ENCODE measurements at regions of chr12 and their contacts with region 1.

Region 1: GRCh38 chr12:67562513-67563287 is 85.8 kb upstream of the DYRK2 start:
- DNase-seq: no peak
- ATAC-seq: no peak
- H3K4me3 ChIP-seq: no peak overlapping the region
- H3K27ac ChIP-seq: no peak overlapping the region
- H3K4me1 ChIP-seq: no peaks in the 10 kb centered on the region
- H3K27me3 ChIP-seq: no peaks in the 10 kb centered on the region
- CTCF ChIP-seq: no peak
- POLR2A ChIP-seq: no peak

Region 2: GRCh38 chr12:67182551-67182950 is 380.1 kb before region 1 on chr12:
- intact Hi-C with region 1: no loop called
- DNase-seq: no peak
- ATAC-seq: no peak
- H3K4me3 ChIP-seq: no peak overlapping the region
- H3K27ac ChIP-seq: no peak overlapping the region
- H3K4me1 ChIP-seq: no peaks in the 10 kb centered on the region
- H3K27me3 ChIP-seq: peaks cover 0 to 3% (median 0%) of the 10 kb centered on the region in 9 donors
- CTCF ChIP-seq: no peak
- POLR2A ChIP-seq: no peak

Region 3: DNA sequence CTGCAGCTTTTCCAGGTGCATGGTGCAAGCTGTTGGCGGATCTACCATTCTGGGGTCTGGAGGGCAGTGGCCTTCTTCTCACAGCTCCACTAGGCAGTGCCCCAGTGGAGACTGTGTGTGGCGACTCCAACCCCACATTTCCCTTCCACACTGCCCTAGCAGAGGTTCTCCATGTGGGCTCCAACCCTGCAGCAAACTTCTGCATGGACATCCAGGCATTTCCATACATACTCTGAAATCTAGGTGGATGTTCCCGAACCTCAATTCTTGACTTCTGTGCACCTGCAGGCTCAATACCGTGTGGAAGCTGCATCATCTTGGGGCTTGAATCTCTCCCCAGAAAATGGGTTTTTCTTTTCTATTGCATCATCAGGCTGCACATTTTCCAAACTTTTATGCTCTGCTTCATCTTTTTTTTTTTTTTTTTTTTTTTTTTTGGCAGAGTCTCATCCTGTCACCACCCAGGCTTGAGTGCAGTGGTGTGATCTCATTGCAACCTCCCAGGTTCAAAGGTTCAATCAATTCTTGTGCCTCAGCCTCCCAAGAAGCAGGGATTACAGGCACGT is 74.3 kb before region 1 on chr12:
- intact Hi-C with region 1: no loop called
- DNase-seq: no peak
- ATAC-seq: no peak
- H3K4me3 ChIP-seq: no peak overlapping the region
- H3K27ac ChIP-seq: no peak overlapping the region
- H3K4me1 ChIP-seq: peaks cover 0 to 13% (median 3%) of the 10 kb centered on the region in 12 donors
- H3K27me3 ChIP-seq: no peaks in the 10 kb centered on the region
- CTCF ChIP-seq: no peak
- POLR2A ChIP-seq: no peak

Region 4: GRCh38 chr12:67592216-67593011 is 29.7 kb after region 1 on chr12:
- intact Hi-C with region 1: loop called in 1 of 10 experiments (anchors 2 kb)
- DNase-seq: peak in 1 of 5 donors; percentile 28
- ATAC-seq: peak in 3 of 4 donors; percentile 61 to 77 (median 76)
- H3K4me3 ChIP-seq: no peak overlapping the region
- H3K27ac ChIP-seq: peak overlapping the region in 4 of 12 donors; percentile 11 to 27 (median 24)
- H3K4me1 ChIP-seq: peaks cover 0 to 33% (median 8%) of the 10 kb centered on the region in 12 donors
- H3K27me3 ChIP-seq: no peaks in the 10 kb centered on the region
- CTCF ChIP-seq: no peak
- POLR2A ChIP-seq: no peak

Region 5: DNA sequence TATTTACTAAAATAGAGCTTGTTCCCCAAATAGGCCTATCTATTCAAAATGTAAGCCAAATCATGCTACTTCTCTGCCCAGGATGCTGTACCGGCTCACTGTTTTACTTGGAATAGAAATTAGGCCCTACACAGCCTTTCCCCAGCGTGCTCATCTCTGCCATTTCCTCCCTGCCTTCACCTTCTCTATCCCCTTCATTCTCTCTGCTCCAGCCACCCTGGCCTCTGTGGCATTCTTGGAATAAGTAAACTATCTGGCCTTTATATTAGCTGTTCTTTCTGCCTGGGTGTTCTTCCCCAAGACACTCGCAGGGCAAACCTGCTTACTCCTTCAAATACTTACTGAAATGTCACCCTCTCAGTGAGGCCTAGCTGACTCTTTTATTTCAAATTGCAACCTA is 54.9 kb after region 1 on chr12:
- intact Hi-C with region 1: no loop called
- DNase-seq: no peak
- ATAC-seq: no peak
- H3K4me3 ChIP-seq: no peak overlapping the region
- H3K27ac ChIP-seq: peak overlapping the region in 1 of 12 donors; percentile 27
- H3K4me1 ChIP-seq: peaks cover 0 to 13% (median 2%) of the 10 kb centered on the region in 12 donors
- H3K27me3 ChIP-seq: no peaks in the 10 kb centered on the region
- CTCF ChIP-seq: no peak
- POLR2A ChIP-seq: no peak

Measured in heart left ventricle (tissue), 16 donors.